PC-9 (cell line): ENCODE measurements at regions of chr11 and their contacts with region 1.

Region 1: GRCh38 chr11:96242971-96243647 is 99.9 kb downstream of the MAML2 start:
- DNase-seq: peak; percentile 91 to 97
- H3K4me3 ChIP-seq: peak overlapping the region; percentile 55
- H3K27ac ChIP-seq: peak overlapping the region; percentile 94
- H3K4me1 ChIP-seq: peaks cover 61% of the 10 kb centered on the region
- H3K27me3 ChIP-seq: no peaks in the 10 kb centered on the region
- CTCF ChIP-seq: no peak

Region 2: DNA sequence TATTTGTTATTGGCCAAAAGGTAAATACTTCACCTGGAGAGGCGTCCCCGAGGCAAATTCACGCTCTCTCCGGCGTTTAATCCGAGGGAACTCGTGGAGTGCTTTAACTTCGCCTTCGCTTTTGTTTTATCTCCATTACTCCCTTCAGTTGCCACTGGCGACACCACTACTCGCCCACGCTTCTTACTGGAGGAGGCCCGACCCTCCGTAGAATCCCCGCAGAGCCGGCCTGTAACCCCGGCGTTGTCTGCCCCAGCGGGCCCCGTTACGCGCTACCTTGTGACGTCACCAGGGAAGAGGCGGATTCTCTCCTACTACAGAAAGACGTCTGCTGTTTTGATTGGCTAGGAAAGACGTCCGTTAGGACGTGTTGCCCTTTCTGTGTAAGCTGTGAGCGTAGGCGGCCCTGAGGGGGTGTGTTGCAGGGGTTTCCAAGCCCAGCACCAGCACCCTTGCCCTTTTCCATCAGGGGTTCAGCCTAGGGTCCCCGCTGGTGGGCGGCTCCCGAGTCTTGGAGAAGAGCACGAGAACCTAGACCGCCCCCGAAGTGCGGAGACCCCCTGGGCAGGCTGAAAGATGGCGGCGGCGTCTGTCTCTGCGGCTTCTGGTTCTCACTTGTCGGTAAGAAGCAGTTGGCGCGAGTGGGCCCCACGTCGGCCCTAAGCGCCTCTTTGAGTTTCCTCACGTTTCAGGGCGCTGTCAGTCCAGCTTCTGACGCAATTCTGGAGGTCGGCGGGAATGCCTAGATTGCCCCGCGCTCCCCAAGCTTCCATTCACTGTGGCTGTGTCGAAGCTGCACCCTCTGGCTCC is 452.8 kb before region 1 on chr11 and contains the start of gene CEP57:
- CTCF ChIA-PET with region 1: no interaction called
- POLR2A ChIA-PET with region 1: interaction called, 21 read pairs
- intact Hi-C with region 1: no loop called
- DNase-seq: peak; percentile 91 to 96
- H3K4me3 ChIP-seq: peak within 1 kb of the TSS; percentile 87
- H3K27ac ChIP-seq: peak within 1 kb of the TSS; percentile 85
- H3K4me1 ChIP-seq: peaks cover 26% of the 10 kb centered on the region
- H3K27me3 ChIP-seq: no peaks in the 10 kb centered on the region
- CTCF ChIP-seq: no peak
- total RNA-seq, gene CEP57: 62.1 and 64.5 TPM in 2 replicates

Region 3: DNA sequence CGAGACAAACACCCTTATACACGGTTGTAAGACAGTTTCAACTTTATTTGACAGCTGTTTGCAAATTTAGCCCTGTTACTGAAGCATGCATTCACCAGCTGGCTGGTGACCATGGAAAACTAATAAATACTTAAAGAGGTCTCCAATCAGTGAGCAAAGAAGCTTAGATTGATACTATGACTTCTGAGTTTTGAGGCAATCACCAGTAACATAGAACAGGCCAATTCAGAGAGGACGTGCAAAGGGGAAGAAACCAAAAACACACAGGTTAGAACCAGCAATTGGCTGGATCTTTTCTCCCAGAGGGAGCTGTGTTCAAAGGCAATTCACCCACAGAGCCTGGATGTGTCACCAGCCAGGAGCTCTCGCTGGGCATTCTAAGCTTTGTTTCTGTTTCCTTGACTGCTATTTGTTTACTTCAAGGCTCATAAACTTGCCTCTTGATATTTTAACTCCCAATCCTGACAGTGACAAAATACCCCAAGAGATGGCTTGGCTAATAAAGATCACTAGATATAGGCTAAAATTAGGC is 205.6 kb before region 1 on chr11:
- CTCF ChIA-PET with region 1: no interaction called
- POLR2A ChIA-PET with region 1: no interaction called
- intact Hi-C with region 1: loop called (anchors 5 kb)
- DNase-seq: peak; percentile 66 to 100
- H3K4me3 ChIP-seq: peak overlapping the region; percentile 38; the same call in 1 of the 2 replicates
- H3K27ac ChIP-seq: peak overlapping the region; percentile 95
- H3K4me1 ChIP-seq: peaks cover 79% of the 10 kb centered on the region
- H3K27me3 ChIP-seq: no peaks in the 10 kb centered on the region
- CTCF ChIP-seq: no peak

Region 4: GRCh38 chr11:96155627-96156378 is 87.3 kb before region 1 on chr11:
- CTCF ChIA-PET with region 1: interaction called, 5 read pairs
- POLR2A ChIA-PET with region 1: interaction called, 14 read pairs
- intact Hi-C with region 1: no loop called
- DNase-seq: peak; percentile 80 to 95
- H3K4me3 ChIP-seq: no peak overlapping the region
- H3K27ac ChIP-seq: peak overlapping the region; percentile 73
- H3K4me1 ChIP-seq: peaks cover 45% of the 10 kb centered on the region
- H3K27me3 ChIP-seq: no peaks in the 10 kb centered on the region
- CTCF ChIP-seq: no peak; the same call in 1 of the 2 replicates

Region 5: DNA sequence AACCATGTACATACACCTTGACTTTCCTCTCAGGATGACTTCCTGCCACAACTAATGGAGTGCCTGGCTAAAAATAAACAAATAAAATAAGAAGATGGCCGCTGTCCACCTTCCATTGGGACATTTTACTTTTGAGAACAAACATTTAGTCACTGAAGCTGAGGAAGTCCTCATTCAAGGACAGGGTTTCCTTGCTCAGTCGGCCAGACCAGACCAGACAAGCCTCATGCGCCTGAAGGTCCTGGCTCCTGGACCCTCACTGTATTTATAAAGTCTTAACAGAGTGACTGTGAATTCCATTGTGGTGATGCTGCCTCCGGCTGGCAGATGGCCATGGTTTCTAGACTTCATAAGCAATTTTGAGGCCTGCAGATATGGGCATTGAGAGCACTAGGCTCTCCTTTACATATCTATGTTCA is 14.6 kb before region 1 on chr11:
- CTCF ChIA-PET with region 1: no interaction called
- POLR2A ChIA-PET with region 1: no interaction called
- intact Hi-C with region 1: loop called (anchors 2 kb)
- DNase-seq: peak; percentile 63 to 83
- H3K4me3 ChIP-seq: no peak overlapping the region
- H3K27ac ChIP-seq: peak overlapping the region; percentile 48
- H3K4me1 ChIP-seq: peaks cover 30% of the 10 kb centered on the region
- H3K27me3 ChIP-seq: no peaks in the 10 kb centered on the region
- CTCF ChIP-seq: no peak

Region 6: GRCh38 chr11:96314326-96315020 is 71.4 kb after region 1 on chr11:
- CTCF ChIA-PET with region 1: interaction called, 5 read pairs
- POLR2A ChIA-PET with region 1: interaction called, 6 read pairs
- intact Hi-C with region 1: loop called (anchors 1 kb)
- DNase-seq: peak; percentile 69 to 100
- H3K4me3 ChIP-seq: peak overlapping the region; percentile 41
- H3K27ac ChIP-seq: peak overlapping the region; percentile 96
- H3K4me1 ChIP-seq: peaks cover 100% of the 10 kb centered on the region
- H3K27me3 ChIP-seq: no peaks in the 10 kb centered on the region
- CTCF ChIP-seq: no peak